Right lobe of liver (tissue), 6 donors: ENCODE measurements at regions of chr16 and their contacts with region 1.

Region 1: GRCh38 chr16:89330177-89330856 is 112.8 kb downstream of the ZNF778 start:
- DNase-seq: peak; percentile 54 to 71 (median 58)
- ATAC-seq: peak; percentile 50 to 68 (median 58)
- H3K4me3 ChIP-seq: no peak overlapping the region
- H3K27ac ChIP-seq: no peak overlapping the region
- H3K4me1 ChIP-seq: peaks cover 0 to 27% (median 9%) of the 10 kb centered on the region in 4 donors
- H3K27me3 ChIP-seq: no peaks in the 10 kb centered on the region
- CTCF ChIP-seq: no peak
- POLR2A ChIP-seq: no peak

Region 2: GRCh38 chr16:89490387-89491237 is 160.3 kb after region 1 on chr16 and contains the start of gene ANKRD11:
- intact Hi-C with region 1: loop called in 1 of 2 experiments (anchors 10 kb)
- DNase-seq: peak; percentile 99 to 100 (median 99)
- ATAC-seq: peak; percentile 96 to 98 (median 96)
- H3K4me3 ChIP-seq: peak within 1 kb of the TSS; percentile 74 to 81 (median 80)
- H3K27ac ChIP-seq: peak within 1 kb of the TSS; percentile 89 to 93 (median 91)
- H3K4me1 ChIP-seq: peaks cover 0 to 37% (median 9%) of the 10 kb centered on the region in 4 donors
- H3K27me3 ChIP-seq: no peaks in the 10 kb centered on the region
- CTCF ChIP-seq: no peak
- POLR2A ChIP-seq: peak; percentile 97
- total RNA-seq, gene ANKRD11: 26.2 to 65.8 (median 41.6) TPM

Region 3: GRCh38 chr16:89511374-89511773 is 181.1 kb after region 1 on chr16:
- intact Hi-C with region 1: loop called in 1 of 2 experiments (anchors 10 kb)
- DNase-seq: no peak
- ATAC-seq: no peak
- H3K4me3 ChIP-seq: no peak overlapping the region
- H3K27ac ChIP-seq: no peak overlapping the region
- H3K4me1 ChIP-seq: peaks cover 0 to 20% (median 4%) of the 10 kb centered on the region in 4 donors
- H3K27me3 ChIP-seq: no peaks in the 10 kb centered on the region
- CTCF ChIP-seq: no peak
- POLR2A ChIP-seq: no peak